A549 (cell line): ENCODE measurements at regions of chr7 and their contacts with region 1.

Region 1: DNA sequence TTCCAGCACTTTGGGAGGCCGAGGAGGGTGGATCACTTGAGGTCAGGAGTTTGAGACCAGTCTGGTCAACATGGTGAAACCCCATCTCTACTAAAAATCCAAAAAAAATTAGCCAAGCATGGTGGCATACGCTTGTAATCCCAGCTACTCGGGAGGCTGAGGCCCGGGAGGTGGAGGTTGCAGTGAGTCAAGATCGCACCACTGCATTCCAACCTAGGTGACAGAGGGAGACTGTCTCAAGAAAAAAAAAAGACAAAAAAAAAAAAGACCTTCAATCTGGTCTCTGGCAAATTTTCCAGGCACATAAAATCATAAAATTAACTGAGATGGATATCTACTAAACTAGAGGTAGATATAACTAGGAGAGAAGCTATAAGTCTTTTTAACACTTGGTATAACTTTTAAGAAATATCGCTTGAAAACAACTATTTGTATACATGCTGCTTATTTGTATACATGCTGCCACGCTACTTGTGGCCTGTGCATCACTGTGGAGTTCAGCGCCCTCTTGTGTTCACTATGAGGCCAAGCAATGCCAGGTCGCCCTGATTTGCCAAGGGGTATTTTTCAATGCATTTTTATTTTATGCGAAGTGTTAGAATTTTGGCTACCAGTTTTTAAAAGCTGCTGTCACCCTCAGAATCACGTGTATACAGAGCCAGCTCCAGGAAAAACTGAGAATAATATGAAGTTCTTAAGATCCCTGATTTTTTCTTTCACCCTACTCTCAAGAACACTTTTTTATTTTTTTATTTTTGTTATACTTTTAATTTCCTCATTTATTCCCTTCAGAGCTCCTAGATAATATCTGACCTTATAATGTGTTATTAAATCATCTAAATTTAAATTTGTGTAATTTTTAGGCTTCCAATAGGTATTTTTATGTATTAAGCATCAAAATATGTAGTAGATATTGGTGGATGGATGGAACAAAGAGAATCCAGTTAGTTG is 26.7 kb downstream of the CYCS start:
- DNase-seq: peak; percentile 81 to 83
- ATAC-seq: peak; percentile 72 to 81; a peak in 3 of 6 replicates
- H3K4me3 ChIP-seq: no peak overlapping the region
- H3K27ac ChIP-seq: 0 out of 6 replicates have a peak overlapping the region, but pooled peaks of 1 of the 2 experiments have one; percentile 21
- H3K4me1 ChIP-seq: peaks cover 6% of the 10 kb centered on the region; the same call in 1 of the 3 replicates
- CTCF ChIP-seq: peak; percentile 95
- EP300 ChIP-seq: no peak
- POLR2A ChIP-seq: no peak
- RAD21 ChIP-seq: peak; percentile 85 to 88

Region 2: GRCh38 chr7:24701261-24702235 is 396.8 kb before region 1 on chr7:
- CTCF ChIA-PET with region 1: interaction called, 14 read pairs
- POLR2A ChIA-PET with region 1: no interaction called
- DNase-seq: no peak
- ATAC-seq: peak in 1 of 2 experiments; percentile 18; a peak in 2 of 6 replicates
- H3K4me3 ChIP-seq: no peak overlapping the region
- H3K27ac ChIP-seq: no peak overlapping the region; a peak in 1 of 6 replicates
- H3K4me1 ChIP-seq: peaks cover 12% of the 10 kb centered on the region; the same call in 2 of the 3 replicates
- CTCF ChIP-seq: no peak
- EP300 ChIP-seq: no peak
- POLR2A ChIP-seq: no peak
- RAD21 ChIP-seq: no peak

Region 3: GRCh38 chr7:24819916-24820689 is 278.3 kb before region 1 on chr7:
- CTCF ChIA-PET with region 1: interaction called, 280 read pairs
- POLR2A ChIA-PET with region 1: interaction called, 15 read pairs
- DNase-seq: peak; percentile 81 to 91
- ATAC-seq: peak; percentile 86 to 87
- H3K4me3 ChIP-seq: peak overlapping the region; percentile 26; the same call in 2 of the 3 replicates
- H3K27ac ChIP-seq: peak overlapping the region; percentile 87 to 88
- H3K4me1 ChIP-seq: peaks cover 44% of the 10 kb centered on the region
- CTCF ChIP-seq: peak; percentile 94
- EP300 ChIP-seq: no peak
- POLR2A ChIP-seq: no peak
- RAD21 ChIP-seq: peak; percentile 93 to 94

Region 4: GRCh38 chr7:25069900-25070443 is 28.4 kb before region 1 on chr7:
- CTCF ChIA-PET with region 1: interaction called, 35 read pairs
- POLR2A ChIA-PET with region 1: interaction called, 3 read pairs
- DNase-seq: peak; percentile 82 to 84
- ATAC-seq: peak; percentile 81 to 87
- H3K4me3 ChIP-seq: peak overlapping the region; percentile 41
- H3K27ac ChIP-seq: peak overlapping the region; percentile 63 to 84
- H3K4me1 ChIP-seq: peaks cover 21% of the 10 kb centered on the region
- CTCF ChIP-seq: peak; percentile 95
- EP300 ChIP-seq: no peak
- POLR2A ChIP-seq: no peak
- RAD21 ChIP-seq: peak; percentile 85 to 89

Region 5: GRCh38 chr7:25117226-25118047 is 19.1 kb after region 1 on chr7:
- CTCF ChIA-PET with region 1: interaction called, 12 read pairs
- POLR2A ChIA-PET with region 1: no interaction called
- DNase-seq: no peak
- ATAC-seq: peak; percentile 26 to 33; a peak in 4 of 6 replicates
- H3K4me3 ChIP-seq: no peak overlapping the region
- H3K27ac ChIP-seq: no peak overlapping the region
- H3K4me1 ChIP-seq: peaks cover 4% of the 10 kb centered on the region; the same call in 2 of the 3 replicates
- CTCF ChIP-seq: no peak
- EP300 ChIP-seq: no peak
- POLR2A ChIP-seq: no peak
- RAD21 ChIP-seq: no peak